ENCODE measurements at regions of chr1 and their contacts with region 1.

Region 1: DNA sequence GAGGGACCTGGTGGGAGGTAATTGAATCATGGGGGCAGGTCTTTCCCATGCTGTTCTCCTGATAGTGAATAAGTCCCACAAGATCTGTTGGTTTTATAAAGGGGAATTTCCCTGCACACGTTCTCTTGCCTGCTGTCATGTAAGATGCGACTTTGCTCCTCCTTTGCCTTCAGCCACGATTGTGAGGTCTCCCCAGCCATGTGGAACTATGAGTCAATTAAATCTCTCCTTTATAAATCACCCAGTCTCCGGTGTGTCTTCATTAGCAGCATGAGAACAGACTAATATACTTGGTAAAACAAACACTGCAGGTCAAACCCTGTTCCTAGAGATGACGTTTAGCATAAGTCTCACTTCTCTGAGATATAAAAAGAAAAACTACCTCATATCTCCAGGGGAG is 148.3 kb downstream of the MATN1 start:
- DNase-seq: no peak
- ATAC-seq: no peak
- H3K4me3 Mint-ChIP-seq: no peak overlapping the region
- H3K27ac Mint-ChIP-seq: no peak overlapping the region
- H3K4me1 Mint-ChIP-seq: no peaks in the 10 kb centered on the region
- H3K27me3 Mint-ChIP-seq: peaks cover 19% of the 10 kb centered on the region

Region 2: DNA sequence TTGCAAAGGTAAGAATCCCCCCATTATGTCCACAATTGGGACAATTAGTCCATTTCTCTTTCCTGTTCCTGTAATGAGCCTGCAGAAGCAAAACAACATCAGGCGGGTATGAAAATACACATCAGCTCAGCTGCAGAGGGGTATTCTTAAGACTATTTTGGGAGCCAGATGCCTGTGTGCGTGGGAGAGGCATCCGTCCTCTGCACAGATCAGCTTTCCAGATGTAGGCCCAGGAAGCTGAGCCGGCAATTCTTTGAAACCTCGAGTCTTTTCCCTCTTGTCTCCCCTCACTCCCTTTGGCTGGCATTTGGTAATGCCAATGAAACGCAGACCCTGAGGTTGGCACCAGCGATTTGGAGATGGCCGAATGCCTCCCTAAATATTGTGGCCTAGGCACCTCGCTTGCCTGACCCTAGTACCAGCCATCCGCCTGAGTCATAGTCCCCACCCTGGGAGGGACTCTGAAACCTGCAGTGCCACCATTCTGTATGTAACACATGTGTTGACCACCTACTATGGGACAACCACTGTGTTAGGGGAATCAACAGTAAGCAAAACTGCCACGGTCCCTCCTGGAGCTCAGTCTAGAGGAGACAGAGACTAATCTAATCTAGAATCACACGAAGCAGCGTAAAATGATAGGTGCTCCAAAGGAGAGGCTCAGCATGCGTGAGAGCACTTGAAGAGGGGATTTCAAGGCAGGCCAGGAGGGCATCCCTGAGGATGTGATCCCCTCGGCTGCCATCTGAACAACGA is 454.6 kb before region 1 on chr1:
- CTCF ChIA-PET with region 1: no interaction called
- POLR2A ChIA-PET with region 1: interaction called, 11 read pairs
- intact Hi-C with region 1: no loop called
- DNase-seq: no peak
- ATAC-seq: no peak
- H3K4me3 Mint-ChIP-seq: no peak overlapping the region
- H3K27ac Mint-ChIP-seq: no peak overlapping the region
- H3K4me1 Mint-ChIP-seq: no peaks in the 10 kb centered on the region
- H3K27me3 Mint-ChIP-seq: peaks cover 3% of the 10 kb centered on the region

Region 3: GRCh38 chr1:30444850-30445249 is 130.2 kb before region 1 on chr1:
- CTCF ChIA-PET with region 1: no interaction called
- POLR2A ChIA-PET with region 1: no interaction called
- intact Hi-C with region 1: no loop called
- DNase-seq: no peak
- ATAC-seq: no peak
- H3K4me3 Mint-ChIP-seq: no peak overlapping the region
- H3K27ac Mint-ChIP-seq: no peak overlapping the region
- H3K4me1 Mint-ChIP-seq: no peaks in the 10 kb centered on the region
- H3K27me3 Mint-ChIP-seq: peaks cover 3% of the 10 kb centered on the region